ENCODE measurements at regions of chr21 and their contacts with region 1.

Region 1: GRCh38 chr21:34745557-34746255 is 76.9 kb downstream of the CLIC6 start:
- DNase-seq: peak; percentile 64 to 81
- ATAC-seq: peak; percentile 80 to 96 (median 84)
- H3K4me3 ChIP-seq: no peak overlapping the region
- H3K27ac ChIP-seq: peak overlapping the region; percentile 17
- H3K4me1 ChIP-seq: peaks cover 8% of the 10 kb centered on the region
- H3K27me3 ChIP-seq: peaks cover 0 to 5% (median 0%) of the 10 kb centered on the region in 3 donors
- CTCF ChIP-seq: peak; percentile 93

Region 2: GRCh38 chr21:34845521-34846451 is 100.1 kb after region 1 on chr21:
- intact Hi-C with region 1: loop called (anchors 10 kb)
- DNase-seq: no peak
- ATAC-seq: peak in 2 of 4 donors; percentile 4 to 15
- H3K4me3 ChIP-seq: peak overlapping the region; percentile 6
- H3K27ac ChIP-seq: peak overlapping the region; percentile 93
- H3K4me1 ChIP-seq: peaks cover 47% of the 10 kb centered on the region
- H3K27me3 ChIP-seq: no peaks in the 10 kb centered on the region
- CTCF ChIP-seq: no peak

Region 3: DNA sequence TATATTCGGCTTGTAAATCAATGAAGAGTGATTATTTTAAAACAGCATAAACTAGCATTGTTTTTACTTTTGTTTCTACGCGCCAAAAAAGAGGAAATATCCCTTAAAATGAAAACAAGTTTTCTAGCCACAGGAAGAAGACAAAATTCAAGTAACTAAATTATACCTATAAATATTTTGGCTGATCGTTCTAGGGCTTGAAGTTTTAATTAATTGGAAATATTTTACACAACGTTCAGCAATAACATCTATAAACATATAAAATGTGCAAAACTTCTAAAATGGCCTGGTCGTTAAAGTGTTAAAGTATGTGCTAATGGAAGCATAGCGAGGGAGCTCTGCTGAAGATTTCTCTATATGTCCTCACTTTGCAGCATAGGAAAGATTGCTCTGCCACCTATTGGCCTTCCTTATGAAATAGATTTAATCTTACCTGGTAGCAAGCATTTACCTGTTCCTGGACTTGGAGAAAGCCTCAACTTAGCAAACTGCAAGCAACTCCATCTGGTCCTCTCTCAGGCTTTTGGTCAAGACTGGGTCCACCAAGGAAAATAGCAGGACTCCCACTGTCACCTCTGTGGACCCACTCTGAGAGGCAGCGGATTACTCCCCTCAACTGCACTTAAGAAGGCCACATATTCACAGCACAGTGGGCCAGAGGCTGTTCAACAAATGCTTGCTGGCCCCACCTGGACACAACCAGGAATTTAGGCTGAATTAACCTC is 654.7 kb after region 1 on chr21:
- intact Hi-C with region 1: loop called in 1 of 2 experiments (anchors 2 kb)
- DNase-seq: no peak
- ATAC-seq: peak; percentile 89 to 97 (median 91)
- H3K4me3 ChIP-seq: peak overlapping the region; percentile 6
- H3K27ac ChIP-seq: no peak overlapping the region
- H3K4me1 ChIP-seq: peaks cover 10% of the 10 kb centered on the region
- H3K27me3 ChIP-seq: no peaks in the 10 kb centered on the region
- CTCF ChIP-seq: peak; percentile 57

Region 4: GRCh38 chr21:35792569-35793305 is 1047.0 kb after region 1 on chr21:
- intact Hi-C with region 1: no loop called
- DNase-seq: no peak
- ATAC-seq: no peak
- H3K4me3 ChIP-seq: no peak overlapping the region
- H3K27ac ChIP-seq: no peak overlapping the region
- H3K4me1 ChIP-seq: no peaks in the 10 kb centered on the region
- H3K27me3 ChIP-seq: no peaks in the 10 kb centered on the region
- CTCF ChIP-seq: no peak

Region 5: GRCh38 chr21:35840197-35840799 is 1094.6 kb after region 1 on chr21:
- intact Hi-C with region 1: loop called (anchors 5 to 10 kb)
- DNase-seq: peak in 1 of 2 donors; percentile 27
- ATAC-seq: peak; percentile 66 to 85 (median 78)
- H3K4me3 ChIP-seq: no peak overlapping the region
- H3K27ac ChIP-seq: no peak overlapping the region
- H3K4me1 ChIP-seq: peaks cover 11% of the 10 kb centered on the region
- H3K27me3 ChIP-seq: no peaks in the 10 kb centered on the region
- CTCF ChIP-seq: peak; percentile 88

Region 6: GRCh38 chr21:36028127-36029069 is 1282.7 kb after region 1 on chr21:
- intact Hi-C with region 1: loop called in 1 of 2 experiments (anchors 5 kb)
- DNase-seq: peak; percentile 62 to 81
- ATAC-seq: peak; percentile 86 to 95 (median 94)
- H3K4me3 ChIP-seq: no peak overlapping the region
- H3K27ac ChIP-seq: no peak overlapping the region
- H3K4me1 ChIP-seq: no peaks in the 10 kb centered on the region
- H3K27me3 ChIP-seq: no peaks in the 10 kb centered on the region
- CTCF ChIP-seq: peak; percentile 90

Measured in psoas muscle (tissue), 8 donors.